ENCODE measurements at regions of chr11 and their contacts with region 1.

Region 1: DNA sequence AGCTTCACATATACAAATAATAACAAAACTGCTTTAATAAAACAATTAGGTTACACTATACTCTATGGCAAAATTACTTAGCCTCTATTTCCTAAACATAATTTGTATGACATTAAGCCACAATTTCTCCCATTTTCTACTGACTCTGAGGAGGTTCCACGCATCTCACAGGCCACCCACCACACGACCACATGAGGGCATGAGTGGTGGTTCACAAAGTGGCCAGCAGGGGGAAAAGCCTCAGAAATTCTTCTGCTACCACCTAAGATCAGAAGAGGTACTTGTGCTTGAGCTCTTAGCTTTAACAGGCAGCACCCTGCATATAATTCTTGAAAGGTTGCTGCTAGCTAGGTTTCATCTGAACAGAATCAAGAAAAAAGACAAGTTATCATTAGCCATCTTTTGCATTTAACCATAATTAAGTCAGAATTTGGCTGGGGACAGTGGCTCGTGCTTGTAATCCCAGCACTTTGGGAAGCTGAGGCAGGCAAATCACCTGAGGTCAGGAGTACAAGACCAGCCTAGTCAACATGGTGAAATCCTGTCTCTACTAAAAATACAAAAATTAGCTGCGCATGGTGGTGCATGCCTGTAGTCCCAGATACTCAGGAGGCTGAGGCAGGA is 7.7 kb downstream of the LPXN start:
- DNase-seq: peak; percentile 84
- H3K4me3 Mint-ChIP-seq: no peak overlapping the region
- H3K27ac Mint-ChIP-seq: peak overlapping the region; percentile 62
- H3K4me1 Mint-ChIP-seq: peaks cover 59% of the 10 kb centered on the region
- H3K27me3 Mint-ChIP-seq: no peaks in the 10 kb centered on the region

Region 2: GRCh38 chr11:58495906-58496305 is 72.1 kb before region 1 on chr11:
- CTCF ChIA-PET with region 1: no interaction called
- DNase-seq: no peak
- H3K4me3 Mint-ChIP-seq: no peak overlapping the region
- H3K27ac Mint-ChIP-seq: no peak overlapping the region
- H3K4me1 Mint-ChIP-seq: peaks cover 14% of the 10 kb centered on the region
- H3K27me3 Mint-ChIP-seq: no peaks in the 10 kb centered on the region

Region 3: DNA sequence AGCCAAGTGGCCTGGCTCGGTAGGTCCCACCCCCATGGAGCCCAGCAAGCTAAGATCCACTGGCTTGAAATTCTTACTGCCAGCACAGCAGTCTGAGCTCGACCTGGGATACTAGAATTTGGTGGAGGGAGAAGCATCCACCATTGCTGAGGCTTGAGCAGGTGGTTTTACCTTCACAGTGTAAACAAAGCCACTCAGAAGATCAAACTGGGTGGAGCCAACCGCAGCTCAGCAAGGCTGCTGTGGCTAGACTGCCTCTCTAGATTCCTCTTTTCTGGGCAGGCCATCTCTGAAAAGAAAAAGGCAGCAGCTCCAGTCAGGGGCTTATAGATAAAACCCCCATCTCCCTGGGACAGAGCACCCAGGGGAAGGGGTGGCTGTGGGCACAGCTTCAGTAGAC is 37.8 kb before region 1 on chr11:
- CTCF ChIA-PET with region 1: interaction called, 17 read pairs
- DNase-seq: peak; percentile 75
- H3K4me3 Mint-ChIP-seq: no peak overlapping the region
- H3K27ac Mint-ChIP-seq: peak overlapping the region; percentile 81
- H3K4me1 Mint-ChIP-seq: peaks cover 55% of the 10 kb centered on the region
- H3K27me3 Mint-ChIP-seq: no peaks in the 10 kb centered on the region